ENCODE measurements at regions of chr10 and their contacts with region 1.

Region 1: GRCh38 chr10:71963756-71964668 is at the start of gene CHST3:
- DNase-seq: peak; percentile 85 to 88
- ATAC-seq: peak; percentile 77 to 91 (median 86)
- H3K4me3 ChIP-seq: peak within 1 kb of the TSS; percentile 67 to 95 (median 84)
- H3K27ac ChIP-seq: peak within 1 kb of the TSS; percentile 92 to 100 (median 98)
- H3K4me1 ChIP-seq: peaks cover 11 to 58% (median 44%) of the 10 kb centered on the region in 9 donors
- H3K27me3 ChIP-seq: peaks cover 0 to 28% (median 0%) of the 10 kb centered on the region in 7 donors
- CTCF ChIP-seq: peak in 2 of 9 donors; percentile 3 to 27
- total RNA-seq, gene CHST3: 14.5 to 28.7 (median 21.3) TPM

Region 2: DNA sequence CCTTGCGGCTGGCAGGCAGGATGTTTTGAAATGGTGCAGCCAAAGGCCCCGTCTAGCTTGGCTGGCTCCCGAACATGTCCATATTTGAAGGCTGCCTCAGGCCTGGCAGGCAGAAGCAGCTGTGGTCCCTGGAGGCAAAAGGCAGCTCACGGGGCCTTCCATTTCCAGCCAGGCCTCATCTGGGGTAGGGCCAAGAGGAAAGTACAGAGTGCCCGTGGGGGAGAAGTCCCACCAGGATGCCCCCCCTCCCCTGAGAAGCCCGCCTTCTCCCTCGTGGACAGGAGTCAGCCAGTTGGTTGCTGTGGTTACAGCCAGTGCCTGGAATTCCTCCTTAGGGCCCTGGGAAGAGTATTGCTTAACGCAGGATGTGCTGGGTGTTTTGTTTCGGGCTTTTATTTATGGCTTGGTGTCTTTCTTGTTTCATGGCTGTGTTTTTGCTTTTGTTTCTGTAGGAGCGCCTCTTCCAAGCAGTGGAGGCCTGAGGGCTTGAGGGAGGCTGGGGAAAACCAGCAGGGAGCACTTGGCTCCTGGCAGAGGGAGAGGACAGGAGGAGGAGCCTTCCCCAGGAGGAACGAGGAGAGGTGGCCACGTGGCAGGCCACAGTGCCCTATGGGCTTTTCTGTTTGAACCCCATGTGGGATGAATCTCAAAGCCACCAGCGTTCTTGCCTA is 45.5 kb after region 1 on chr10:
- intact Hi-C with region 1: loop called in 4 of 10 experiments (anchors 5 kb)
- DNase-seq: peak; percentile 85 to 90
- ATAC-seq: peak; percentile 78 to 88 (median 84)
- H3K4me3 ChIP-seq: peak overlapping the region in 1 of 10 donors; percentile 12
- H3K27ac ChIP-seq: peak overlapping the region; percentile 78 to 94 (median 88)
- H3K4me1 ChIP-seq: peaks cover 33 to 79% (median 60%) of the 10 kb centered on the region in 9 donors
- H3K27me3 ChIP-seq: no peaks in the 10 kb centered on the region
- CTCF ChIP-seq: no peak

Region 3: DNA sequence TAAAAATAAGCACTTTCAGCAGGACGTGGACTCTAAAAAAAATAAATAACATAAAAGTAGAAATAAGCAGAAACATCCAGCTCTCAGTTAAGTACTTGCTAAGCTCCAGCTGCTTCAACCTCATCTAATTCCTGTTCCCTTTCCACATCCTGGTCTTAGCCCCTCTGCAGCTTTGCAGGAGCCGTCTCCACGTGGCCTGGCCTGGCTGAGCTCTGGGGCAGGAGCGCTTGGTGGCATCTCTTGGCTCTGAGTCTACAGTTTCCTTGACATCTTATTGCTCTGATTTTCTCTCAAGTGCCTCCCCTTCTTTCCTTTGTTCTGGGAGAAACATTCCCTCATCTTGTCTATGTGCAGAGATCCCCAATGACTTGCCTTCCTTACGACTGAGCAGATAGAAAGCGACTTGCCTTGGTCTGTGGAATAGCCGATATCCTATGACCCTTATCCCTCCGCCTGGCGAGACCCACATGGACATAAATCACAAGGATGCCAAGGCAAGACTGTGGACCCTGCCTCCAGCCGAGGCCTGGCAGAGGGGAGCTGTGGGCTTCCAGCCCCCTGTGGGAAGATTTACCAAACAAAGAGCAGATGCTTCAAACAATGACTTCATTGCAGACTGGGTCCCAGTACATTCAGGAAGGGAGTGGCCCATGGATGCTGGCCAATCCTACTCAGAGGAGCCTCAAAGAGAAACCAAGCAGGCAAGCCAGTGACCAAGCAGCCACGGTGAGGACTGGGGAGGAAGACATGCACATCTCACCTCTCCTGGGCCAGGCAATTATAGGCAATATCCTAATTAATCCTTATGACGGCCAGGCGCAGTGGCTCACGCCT is 62.5 kb after region 1 on chr10:
- intact Hi-C with region 1: no loop called
- DNase-seq: no peak
- ATAC-seq: peak in 3 of 8 donors; percentile 21 to 49 (median 34)
- H3K4me3 ChIP-seq: no peak overlapping the region
- H3K27ac ChIP-seq: no peak overlapping the region
- H3K4me1 ChIP-seq: peaks cover 0 to 25% (median 13%) of the 10 kb centered on the region in 9 donors
- H3K27me3 ChIP-seq: no peaks in the 10 kb centered on the region
- CTCF ChIP-seq: no peak

Region 4: DNA sequence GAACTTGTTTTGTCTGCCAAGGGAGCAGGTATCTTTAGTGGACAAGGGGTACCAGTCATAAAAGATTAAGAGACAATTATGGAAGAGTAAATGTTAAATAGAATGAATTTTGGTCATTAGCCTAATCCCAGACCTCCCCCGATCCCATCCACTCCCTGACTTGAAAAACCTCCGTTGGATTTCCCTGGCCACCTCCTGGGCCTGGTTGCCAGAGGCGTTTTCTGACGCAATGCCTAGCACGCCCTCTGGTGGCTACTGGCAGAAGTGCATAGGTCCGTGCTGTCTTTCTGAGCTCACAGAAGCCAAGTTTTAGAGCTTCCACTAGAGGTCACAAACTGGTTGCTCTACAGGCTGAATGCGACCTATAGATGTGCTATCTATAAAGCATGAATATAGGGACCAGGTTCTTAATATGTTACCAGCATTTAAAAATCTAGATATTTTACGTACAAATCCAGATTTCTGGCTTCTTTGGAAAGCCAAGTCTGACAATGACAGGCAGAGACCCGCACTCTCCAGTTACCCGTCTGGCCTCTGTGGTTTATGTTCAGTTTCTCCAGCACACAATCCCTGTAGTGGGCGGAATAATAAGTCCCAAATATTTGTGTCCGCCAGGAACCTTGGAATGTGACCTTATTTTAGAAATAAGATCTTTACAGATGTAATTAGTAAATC is 84.6 kb after region 1 on chr10:
- intact Hi-C with region 1: loop called in 3 of 10 experiments (anchors 2 to 5 kb)
- DNase-seq: peak; percentile 94
- ATAC-seq: peak; percentile 58 to 91 (median 84)
- H3K4me3 ChIP-seq: no peak overlapping the region
- H3K27ac ChIP-seq: no peak overlapping the region
- H3K4me1 ChIP-seq: peaks cover 0 to 25% (median 10%) of the 10 kb centered on the region in 9 donors
- H3K27me3 ChIP-seq: no peaks in the 10 kb centered on the region
- CTCF ChIP-seq: peak; percentile 99 to 100 (median 100)

Region 5: GRCh38 chr10:72248468-72249151 is 284.6 kb after region 1 on chr10:
- intact Hi-C with region 1: loop called in 1 of 10 experiments (anchors 10 kb)
- DNase-seq: peak; percentile 81 to 87
- ATAC-seq: peak; percentile 83 to 91 (median 89)
- H3K4me3 ChIP-seq: peak overlapping the region in 6 of 10 donors; percentile 4 to 31 (median 22)
- H3K27ac ChIP-seq: peak overlapping the region; percentile 78 to 94 (median 88)
- H3K4me1 ChIP-seq: peaks cover 47 to 100% (median 90%) of the 10 kb centered on the region in 9 donors
- H3K27me3 ChIP-seq: no peaks in the 10 kb centered on the region
- CTCF ChIP-seq: no peak

Measured in heart right ventricle (tissue), 16 donors.